H1 (cell line): ENCODE measurements at regions of chr3 and their contacts with region 1.

Region 1: GRCh38 chr3:53643757-53644156 is 149.3 kb downstream of the CACNA1D start:
- DNase-seq: no peak
- H3K4me3 ChIP-seq: no peak overlapping the region
- H3K27ac ChIP-seq: no peak overlapping the region
- H3K4me1 ChIP-seq: 0 out of 7 replicates have a peak, but pooled peaks cover 0 to 2% (median 0%) of the 10 kb centered on the region in 4 experiments
- H3K27me3 ChIP-seq: no peaks in the 10 kb centered on the region; a peak in 2 of 7 replicates
- CTCF ChIP-seq: peak in 2 of 3 experiments; percentile 17 to 43; a peak in 2 of 4 replicates
- EP300 ChIP-seq: no peak
- POLR2A ChIP-seq: no peak
- RAD21 ChIP-seq: peak; percentile 12 to 30; a peak in 3 of 4 replicates

Region 2: GRCh38 chr3:53633197-53633787 is 10.5 kb before region 1 on chr3:
- CTCF ChIA-PET with region 1: interaction called, 23 read pairs
- POLR2A ChIA-PET with region 1: no interaction called
- DNase-seq: no peak
- H3K4me3 ChIP-seq: no peak overlapping the region
- H3K27ac ChIP-seq: no peak overlapping the region
- H3K4me1 ChIP-seq: no peaks in the 10 kb centered on the region
- H3K27me3 ChIP-seq: peaks cover 0 to 1% (median 0%) of the 10 kb centered on the region in 4 experiments; a peak in 1 of 7 replicates
- CTCF ChIP-seq: no peak
- EP300 ChIP-seq: no peak
- POLR2A ChIP-seq: no peak
- RAD21 ChIP-seq: no peak